Thyroid gland (tissue), 4 donors: ENCODE measurements at regions of chr1 and their contacts with region 1.

Region 1: DNA sequence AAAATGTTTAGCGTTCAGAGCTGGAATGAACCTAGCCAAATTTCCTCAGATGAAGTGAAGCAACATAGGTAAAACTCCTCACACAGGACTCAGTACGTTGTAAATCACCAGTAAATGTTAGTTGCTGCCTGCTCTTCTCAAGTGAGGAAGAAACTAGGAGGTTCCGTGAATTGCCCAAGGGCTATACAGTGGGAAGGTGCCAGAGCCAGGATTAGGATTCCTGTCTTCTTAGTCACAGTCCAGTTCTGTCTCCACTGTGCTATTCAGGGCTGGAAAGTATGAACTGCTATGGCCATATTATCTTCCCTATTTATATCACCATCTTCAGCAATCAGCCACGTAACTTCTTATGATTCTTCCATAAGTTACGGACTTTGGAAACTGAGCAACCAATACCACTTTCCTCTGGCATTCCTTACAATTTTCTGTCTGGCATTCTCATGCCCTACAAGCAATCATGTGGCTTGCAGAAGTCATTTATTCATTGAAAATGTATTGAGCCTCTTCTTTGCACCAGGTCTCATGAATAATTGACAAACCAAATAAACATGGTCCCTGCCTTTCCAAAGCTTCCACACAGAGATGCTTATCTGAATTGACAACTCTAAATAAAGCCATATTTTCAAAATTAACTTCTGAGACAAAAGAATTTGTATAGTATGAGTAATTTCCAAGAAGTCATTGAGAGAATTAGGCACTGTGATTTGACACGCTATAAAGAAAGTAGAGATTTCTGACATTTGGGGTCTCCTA is 271.6 kb upstream of the SGIP1 start:
- DNase-seq: no peak
- H3K4me3 ChIP-seq: no peak overlapping the region
- H3K27ac ChIP-seq: no peak overlapping the region
- H3K4me1 ChIP-seq: peaks cover 6 to 8% of the 10 kb centered on the region in 2 donors
- H3K27me3 ChIP-seq: no peaks in the 10 kb centered on the region
- CTCF ChIP-seq: no peak
- POLR2A ChIP-seq: no peak

Region 2: GRCh38 chr1:66214901-66215300 is 47.5 kb before region 1 on chr1:
- intact Hi-C with region 1: no loop called
- DNase-seq: no peak
- H3K4me3 ChIP-seq: no peak overlapping the region
- H3K27ac ChIP-seq: no peak overlapping the region
- H3K4me1 ChIP-seq: no peaks in the 10 kb centered on the region
- H3K27me3 ChIP-seq: no peaks in the 10 kb centered on the region
- CTCF ChIP-seq: no peak
- POLR2A ChIP-seq: no peak

Region 3: GRCh38 chr1:66327588-66327987 is 65.2 kb after region 1 on chr1:
- intact Hi-C with region 1: loop called (anchors 10 kb)
- DNase-seq: no peak
- H3K4me3 ChIP-seq: no peak overlapping the region
- H3K27ac ChIP-seq: no peak overlapping the region
- H3K4me1 ChIP-seq: peaks cover 7 to 12% of the 10 kb centered on the region in 2 donors
- H3K27me3 ChIP-seq: no peaks in the 10 kb centered on the region
- CTCF ChIP-seq: no peak
- POLR2A ChIP-seq: no peak

Region 4: GRCh38 chr1:66371233-66372005 is 109.0 kb after region 1 on chr1:
- intact Hi-C with region 1: no loop called
- DNase-seq: no peak
- H3K4me3 ChIP-seq: no peak overlapping the region
- H3K27ac ChIP-seq: peak overlapping the region in 1 of 3 donors; percentile 7
- H3K4me1 ChIP-seq: peaks cover 9 to 16% of the 10 kb centered on the region in 2 donors
- H3K27me3 ChIP-seq: no peaks in the 10 kb centered on the region
- CTCF ChIP-seq: no peak
- POLR2A ChIP-seq: no peak

Region 5: GRCh38 chr1:67404212-67404620 is 1141.8 kb after region 1 on chr1:
- intact Hi-C with region 1: no loop called
- DNase-seq: no peak
- H3K4me3 ChIP-seq: no peak overlapping the region
- H3K27ac ChIP-seq: peak overlapping the region in 1 of 3 donors; percentile 69
- H3K4me1 ChIP-seq: peaks cover 8 to 26% of the 10 kb centered on the region in 2 donors
- H3K27me3 ChIP-seq: no peaks in the 10 kb centered on the region
- CTCF ChIP-seq: no peak
- POLR2A ChIP-seq: no peak